ENCODE measurements at regions of chr17 and their contacts with region 1.

Region 1: GRCh38 chr17:4565209-4566141 is 5.1 kb upstream of the GGT6 start:
- DNase-seq: peak in 8 of 9 experiments; percentile 20 to 79 (median 50)
- ATAC-seq: peak; percentile 88
- H3K4me3 ChIP-seq: no peak overlapping the region
- H3K4me3 Mint-ChIP-seq: peak overlapping the region; percentile 59
- H3K27ac ChIP-seq: no peak overlapping the region
- H3K27ac Mint-ChIP-seq: no peak overlapping the region
- H3K4me1 ChIP-seq: peaks cover 3% of the 10 kb centered on the region
- H3K4me1 Mint-ChIP-seq: peaks cover 24% of the 10 kb centered on the region
- H3K27me3 ChIP-seq: no peaks in the 10 kb centered on the region
- H3K27me3 Mint-ChIP-seq: no peaks in the 10 kb centered on the region
- CTCF ChIP-seq: peak; percentile 77

Region 2: DNA sequence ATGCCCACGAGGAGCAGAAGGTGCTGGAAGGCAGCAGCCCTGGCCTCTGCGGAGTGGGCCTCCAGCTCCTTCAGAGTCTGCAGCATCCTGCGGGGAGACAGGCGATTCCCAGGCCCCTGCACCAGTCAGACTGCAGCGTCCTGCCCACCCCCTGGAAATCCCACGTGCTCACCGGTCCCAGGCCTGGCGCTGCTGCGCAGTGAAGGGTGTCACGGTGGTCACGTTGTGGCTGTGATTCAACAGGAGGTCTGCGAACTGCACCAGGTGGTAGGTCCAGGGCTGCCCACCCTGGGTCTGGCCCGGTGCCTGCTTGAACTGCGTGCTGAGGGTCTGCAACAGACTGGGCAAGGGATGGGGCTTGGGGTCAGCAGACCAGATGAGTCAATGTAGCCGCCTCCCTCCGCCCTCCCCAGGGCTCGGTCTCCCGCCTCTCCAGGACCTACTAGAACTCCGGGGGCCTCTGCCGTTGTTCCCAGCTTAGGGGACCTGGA is 17.5 kb before region 1 on chr17:
- CTCF ChIA-PET with region 1: interaction called, 14 read pairs
- POLR2A ChIA-PET with region 1: no interaction called
- intact Hi-C with region 1: no loop called
- DNase-seq: no peak
- ATAC-seq: no peak
- H3K4me3 ChIP-seq: no peak overlapping the region
- H3K4me3 Mint-ChIP-seq: no peak overlapping the region
- H3K27ac ChIP-seq: no peak overlapping the region
- H3K27ac Mint-ChIP-seq: no peak overlapping the region
- H3K4me1 ChIP-seq: no peaks in the 10 kb centered on the region
- H3K4me1 Mint-ChIP-seq: peaks cover 3% of the 10 kb centered on the region
- H3K27me3 ChIP-seq: no peaks in the 10 kb centered on the region
- H3K27me3 Mint-ChIP-seq: no peaks in the 10 kb centered on the region
- CTCF ChIP-seq: no peak

Region 3: DNA sequence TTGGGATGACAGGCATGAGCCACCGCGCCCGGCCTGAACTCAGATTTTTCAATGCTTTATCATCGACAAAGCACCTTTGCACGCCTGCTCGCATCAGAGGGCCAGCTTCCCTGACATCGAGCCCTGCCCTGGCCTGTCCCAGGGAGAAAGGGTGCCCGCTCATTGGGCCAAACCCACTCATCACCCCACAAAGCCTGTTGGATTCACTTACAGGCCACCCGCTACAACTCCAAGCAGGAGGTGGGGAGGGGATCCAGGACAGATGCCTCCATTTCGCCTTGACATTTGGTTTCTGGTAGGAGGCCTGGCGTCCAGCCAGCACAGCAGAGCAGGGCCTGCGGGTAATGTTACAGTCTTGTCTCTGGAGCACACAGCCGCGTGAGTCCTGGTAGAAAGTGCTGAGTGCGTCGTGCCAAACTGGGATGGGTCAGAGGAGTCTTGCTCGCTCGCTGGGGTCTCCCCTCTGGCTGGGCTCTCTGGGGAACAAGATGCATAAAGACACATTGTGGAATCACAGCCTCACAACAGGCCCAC is 38.7 kb after region 1 on chr17:
- CTCF ChIA-PET with region 1: no interaction called
- POLR2A ChIA-PET with region 1: no interaction called
- intact Hi-C with region 1: no loop called
- DNase-seq: no peak
- ATAC-seq: no peak
- H3K4me3 ChIP-seq: no peak overlapping the region
- H3K4me3 Mint-ChIP-seq: no peak overlapping the region
- H3K27ac ChIP-seq: no peak overlapping the region
- H3K27ac Mint-ChIP-seq: no peak overlapping the region
- H3K4me1 ChIP-seq: no peaks in the 10 kb centered on the region
- H3K4me1 Mint-ChIP-seq: no peaks in the 10 kb centered on the region
- H3K27me3 ChIP-seq: no peaks in the 10 kb centered on the region
- H3K27me3 Mint-ChIP-seq: peaks cover 3% of the 10 kb centered on the region
- CTCF ChIP-seq: no peak

Region 4: GRCh38 chr17:4625181-4625617 is 59.7 kb after region 1 on chr17:
- CTCF ChIA-PET with region 1: interaction called, 23 read pairs
- POLR2A ChIA-PET with region 1: no interaction called
- intact Hi-C with region 1: loop called (anchors 1 kb)
- DNase-seq: no peak
- ATAC-seq: no peak
- H3K4me3 ChIP-seq: no peak overlapping the region
- H3K4me3 Mint-ChIP-seq: no peak overlapping the region
- H3K27ac ChIP-seq: no peak overlapping the region
- H3K27ac Mint-ChIP-seq: no peak overlapping the region
- H3K4me1 ChIP-seq: no peaks in the 10 kb centered on the region
- H3K4me1 Mint-ChIP-seq: no peaks in the 10 kb centered on the region
- H3K27me3 ChIP-seq: no peaks in the 10 kb centered on the region
- H3K27me3 Mint-ChIP-seq: peaks cover 6% of the 10 kb centered on the region
- CTCF ChIP-seq: no peak

Region 5: GRCh38 chr17:4881761-4882555 is 316.5 kb after region 1 on chr17:
- CTCF ChIA-PET with region 1: interaction called, 15 read pairs
- POLR2A ChIA-PET with region 1: no interaction called
- intact Hi-C with region 1: no loop called
- DNase-seq: peak; percentile 43 to 83 (median 72)
- ATAC-seq: peak; percentile 98
- H3K4me3 ChIP-seq: no peak overlapping the region
- H3K4me3 Mint-ChIP-seq: no peak overlapping the region
- H3K27ac ChIP-seq: no peak overlapping the region
- H3K27ac Mint-ChIP-seq: no peak overlapping the region
- H3K4me1 ChIP-seq: no peaks in the 10 kb centered on the region
- H3K4me1 Mint-ChIP-seq: peaks cover 3% of the 10 kb centered on the region
- H3K27me3 ChIP-seq: no peaks in the 10 kb centered on the region
- H3K27me3 Mint-ChIP-seq: no peaks in the 10 kb centered on the region
- CTCF ChIP-seq: peak; percentile 79

Region 6: DNA sequence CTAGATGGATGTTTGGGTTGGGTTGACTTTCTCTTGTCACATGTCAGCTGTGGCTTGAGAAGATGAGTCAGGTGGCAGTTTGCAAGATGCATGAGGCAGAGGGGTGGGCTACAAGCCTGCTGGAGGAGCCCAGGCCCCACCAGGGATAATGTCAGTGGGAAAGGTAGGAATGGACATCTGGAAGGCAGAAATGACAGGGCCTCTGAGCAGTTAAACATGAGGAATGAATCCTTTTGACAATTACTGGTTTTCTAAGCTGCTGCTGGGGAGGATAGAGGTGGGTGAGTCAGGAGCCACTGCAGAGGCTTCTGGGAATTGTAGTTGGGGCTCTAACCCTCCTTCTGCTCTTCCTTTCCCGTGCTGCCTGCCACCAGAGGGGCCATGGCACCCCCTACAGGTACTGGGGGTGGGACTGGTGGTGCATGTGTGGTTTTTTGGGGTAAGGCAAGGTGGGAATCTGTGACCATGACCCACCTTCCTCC is 454.0 kb after region 1 on chr17:
- CTCF ChIA-PET with region 1: no interaction called
- POLR2A ChIA-PET with region 1: no interaction called
- intact Hi-C with region 1: loop called in 1 of 2 experiments (anchors 5 kb)
- DNase-seq: peak in 8 of 9 experiments; percentile 32 to 68 (median 52)
- ATAC-seq: peak; percentile 95
- H3K4me3 ChIP-seq: no peak overlapping the region
- H3K4me3 Mint-ChIP-seq: no peak overlapping the region
- H3K27ac ChIP-seq: no peak overlapping the region
- H3K27ac Mint-ChIP-seq: peak overlapping the region; percentile 75
- H3K4me1 ChIP-seq: no peaks in the 10 kb centered on the region
- H3K4me1 Mint-ChIP-seq: peaks cover 7% of the 10 kb centered on the region
- H3K27me3 ChIP-seq: no peaks in the 10 kb centered on the region
- H3K27me3 Mint-ChIP-seq: no peaks in the 10 kb centered on the region
- CTCF ChIP-seq: no peak

Measured in CD8-positive, alpha-beta T cell (primary cell).